PC-9 (cell line): ENCODE measurements at regions of chr9 and their contacts with region 1.

Region 1: GRCh38 chr9:127112056-127112455 is 10.4 kb downstream of the ANGPTL2 start:
- DNase-seq: peak; percentile 56 to 85
- H3K4me3 ChIP-seq: no peak overlapping the region
- H3K27ac ChIP-seq: no peak overlapping the region
- H3K4me1 ChIP-seq: peaks cover 46% of the 10 kb centered on the region
- H3K27me3 ChIP-seq: no peaks in the 10 kb centered on the region
- CTCF ChIP-seq: no peak

Region 2: GRCh38 chr9:126490871-126491567 is 621.0 kb before region 1 on chr9:
- CTCF ChIA-PET with region 1: no interaction called
- POLR2A ChIA-PET with region 1: no interaction called
- intact Hi-C with region 1: no loop called
- DNase-seq: peak; percentile 50 to 53
- H3K4me3 ChIP-seq: no peak overlapping the region
- H3K27ac ChIP-seq: no peak overlapping the region
- H3K4me1 ChIP-seq: no peaks in the 10 kb centered on the region
- H3K27me3 ChIP-seq: no peaks in the 10 kb centered on the region
- CTCF ChIP-seq: peak; percentile 95

Region 3: DNA sequence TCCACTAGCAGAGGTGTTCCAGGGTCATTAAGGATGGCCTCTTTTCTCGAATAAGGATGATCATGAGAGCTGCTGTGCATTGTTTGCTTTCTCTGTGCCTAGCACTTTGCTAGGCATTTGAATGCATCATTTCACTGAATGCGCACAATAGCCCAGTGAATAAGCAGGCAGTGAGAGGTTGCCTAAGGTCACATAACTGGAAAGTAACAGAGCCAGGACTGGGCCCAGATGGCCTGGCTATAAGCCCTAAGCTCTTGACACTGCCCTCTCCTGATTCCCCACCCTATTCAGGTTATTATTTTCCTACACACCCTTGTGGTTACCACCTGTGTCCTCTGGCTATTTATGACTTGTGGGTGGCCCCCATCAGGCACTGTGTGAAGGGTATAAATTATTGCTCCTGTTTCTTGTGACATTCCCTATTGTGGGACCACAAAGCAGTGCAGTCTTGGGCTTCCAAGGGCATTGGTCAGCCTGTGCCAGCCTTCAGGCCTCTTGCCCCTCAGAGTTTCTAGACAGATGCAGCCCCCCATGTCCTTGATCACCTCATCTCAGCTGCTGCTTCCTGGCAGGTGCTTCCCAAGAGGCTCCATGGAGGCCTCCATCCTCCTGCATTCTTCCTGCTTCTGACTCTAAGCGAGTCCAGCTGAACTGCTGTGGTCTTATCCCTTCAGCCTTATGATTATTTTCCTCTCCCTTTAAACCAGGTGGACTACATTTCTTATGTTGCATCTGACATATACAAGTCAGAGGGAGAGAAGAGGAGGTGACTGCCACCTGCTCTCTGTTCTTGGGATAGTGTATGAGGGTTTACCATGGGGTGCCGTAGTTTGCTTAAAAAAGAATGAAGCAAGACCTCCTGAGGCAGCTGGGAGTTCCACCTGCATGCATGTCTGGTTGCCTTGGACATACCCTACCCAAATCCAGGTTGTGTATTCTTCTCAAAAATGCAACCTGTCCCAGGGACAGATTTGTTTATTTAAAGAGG is 37.2 kb before region 1 on chr9:
- CTCF ChIA-PET with region 1: interaction called, 5 read pairs
- POLR2A ChIA-PET with region 1: no interaction called
- intact Hi-C with region 1: loop called (anchors 2 kb)
- DNase-seq: peak; percentile 69 to 96
- H3K4me3 ChIP-seq: no peak overlapping the region
- H3K27ac ChIP-seq: 0 out of 2 replicates have a peak overlapping the region, but pooled peaks have one; percentile 13
- H3K4me1 ChIP-seq: peaks cover 56% of the 10 kb centered on the region
- H3K27me3 ChIP-seq: no peaks in the 10 kb centered on the region
- CTCF ChIP-seq: no peak

Region 4: GRCh38 chr9:127144670-127145445 is 32.8 kb after region 1 on chr9:
- CTCF ChIA-PET with region 1: no interaction called
- POLR2A ChIA-PET with region 1: no interaction called
- intact Hi-C with region 1: no loop called
- DNase-seq: no peak
- H3K4me3 ChIP-seq: no peak overlapping the region
- H3K27ac ChIP-seq: no peak overlapping the region
- H3K4me1 ChIP-seq: no peaks in the 10 kb centered on the region
- H3K27me3 ChIP-seq: no peaks in the 10 kb centered on the region
- CTCF ChIP-seq: no peak

Region 5: DNA sequence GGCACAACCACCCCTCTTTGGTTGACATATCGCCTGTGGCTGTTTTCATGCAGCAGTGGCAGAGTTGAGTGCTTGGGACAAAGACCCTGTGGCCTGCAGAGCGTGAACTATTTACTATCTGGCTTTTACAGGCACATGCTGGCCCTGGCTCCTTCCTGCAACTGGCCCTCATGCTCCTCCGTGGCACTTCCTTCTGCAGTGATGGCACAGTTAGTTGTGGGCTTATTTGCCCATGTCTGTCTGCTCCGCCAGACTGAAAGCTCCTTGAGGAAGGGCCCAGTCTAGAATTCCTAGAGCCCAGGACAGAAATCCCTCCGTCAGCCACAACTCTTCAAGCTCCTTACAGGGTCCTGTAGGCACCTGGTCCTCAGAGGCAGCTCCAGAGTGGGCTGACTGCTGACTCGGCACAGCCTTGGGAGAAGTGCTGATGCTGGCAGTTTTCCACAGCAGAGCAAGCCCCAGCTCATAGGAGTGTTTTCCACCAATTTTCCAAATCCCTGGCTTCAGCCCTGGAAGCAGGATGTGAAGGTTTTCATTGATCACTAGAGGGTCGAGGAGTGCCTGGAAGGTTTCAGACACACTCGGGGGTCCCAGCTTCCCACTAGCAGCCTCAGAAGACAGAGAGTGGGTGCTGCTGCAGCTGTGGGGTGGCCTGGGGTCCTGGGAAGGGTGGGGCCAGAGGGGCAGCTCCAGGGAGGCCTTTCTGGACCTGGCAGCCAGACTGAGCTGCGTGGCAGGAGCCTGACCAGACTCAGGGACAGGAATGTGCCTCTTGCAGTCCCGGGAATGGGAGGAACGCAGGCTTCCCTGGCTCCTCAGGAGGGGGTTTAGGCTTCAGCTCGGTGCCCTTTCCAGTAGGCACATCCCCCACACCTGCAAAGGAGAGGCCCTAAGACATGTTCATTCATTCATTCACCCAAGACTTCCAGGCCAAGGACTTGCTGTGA is 66.9 kb after region 1 on chr9:
- CTCF ChIA-PET with region 1: no interaction called
- POLR2A ChIA-PET with region 1: no interaction called
- intact Hi-C with region 1: no loop called
- DNase-seq: no peak
- H3K4me3 ChIP-seq: no peak overlapping the region
- H3K27ac ChIP-seq: no peak overlapping the region
- H3K4me1 ChIP-seq: no peaks in the 10 kb centered on the region
- H3K27me3 ChIP-seq: no peaks in the 10 kb centered on the region
- CTCF ChIP-seq: no peak

Region 6: DNA sequence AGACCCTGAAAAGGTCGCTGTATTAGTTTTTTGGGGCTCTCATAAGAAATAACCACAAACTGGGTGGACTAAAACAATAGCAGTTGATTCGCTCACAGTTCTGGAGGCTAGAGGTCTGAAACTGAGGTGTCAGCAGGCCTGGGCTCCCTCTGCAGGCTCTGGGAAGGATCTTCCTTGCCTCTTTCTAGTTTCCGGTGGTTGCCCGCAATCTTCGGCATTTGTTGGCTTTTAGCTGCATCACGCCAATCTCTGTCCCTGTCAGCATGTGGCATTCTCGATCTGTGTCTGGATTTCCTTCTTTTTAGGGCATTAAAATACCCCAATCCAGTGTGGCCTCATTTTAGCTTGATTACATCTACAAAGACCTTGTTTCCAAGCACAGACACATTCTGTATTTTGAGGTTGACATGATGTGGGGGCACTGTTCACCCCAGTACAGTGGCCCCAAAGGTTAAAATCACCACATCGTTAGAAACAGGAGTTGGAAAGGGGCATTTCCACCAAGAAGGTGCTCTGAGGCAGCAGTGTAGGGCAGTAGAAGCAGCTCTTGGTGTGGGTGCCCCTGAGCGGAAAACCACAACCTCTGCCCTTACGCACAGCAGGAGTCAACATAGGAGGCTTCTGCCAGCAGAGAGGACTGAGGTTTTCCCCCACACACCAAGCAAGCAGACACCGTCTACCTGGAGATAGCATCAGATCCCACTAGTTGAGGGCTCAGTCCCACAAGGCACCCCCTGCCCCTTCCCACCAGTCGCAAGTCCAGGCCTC is 325.6 kb after region 1 on chr9:
- CTCF ChIA-PET with region 1: no interaction called
- POLR2A ChIA-PET with region 1: no interaction called
- intact Hi-C with region 1: no loop called
- DNase-seq: no peak
- H3K4me3 ChIP-seq: no peak overlapping the region
- H3K27ac ChIP-seq: no peak overlapping the region
- H3K4me1 ChIP-seq: no peaks in the 10 kb centered on the region
- H3K27me3 ChIP-seq: no peaks in the 10 kb centered on the region
- CTCF ChIP-seq: no peak